ENCODE measurements at regions of chr20 and their contacts with region 1.

Region 1: GRCh38 chr20:45857114-45857881 is at the starts of genes ACOT8 and ZSWIM3:
- DNase-seq: peak; percentile 62 to 100 (median 97)
- ATAC-seq: peak; percentile 99
- H3K4me3 ChIP-seq: peak within 1 kb of the TSS; percentile 94
- H3K4me3 Mint-ChIP-seq: peak within 1 kb of the TSS; percentile 95 to 98 (median 96)
- H3K27ac ChIP-seq: peak within 1 kb of the TSS; percentile 95
- H3K27ac Mint-ChIP-seq: peak within 1 kb of the TSS; percentile 96 to 99 (median 98)
- H3K4me1 ChIP-seq: peaks cover 16 to 26% of the 10 kb centered on the region in 2 donors
- H3K4me1 Mint-ChIP-seq: peaks cover 23 to 76% (median 63%) of the 10 kb centered on the region in 7 donors
- H3K27me3 ChIP-seq: no peaks in the 10 kb centered on the region
- H3K27me3 Mint-ChIP-seq: no peaks in the 10 kb centered on the region
- total RNA-seq, gene ACOT8: 20.5 to 35.5 (median 29.2) TPM
- total RNA-seq, gene ZSWIM3: 1.3 to 6.8 (median 6.0) TPM

Region 2: DNA sequence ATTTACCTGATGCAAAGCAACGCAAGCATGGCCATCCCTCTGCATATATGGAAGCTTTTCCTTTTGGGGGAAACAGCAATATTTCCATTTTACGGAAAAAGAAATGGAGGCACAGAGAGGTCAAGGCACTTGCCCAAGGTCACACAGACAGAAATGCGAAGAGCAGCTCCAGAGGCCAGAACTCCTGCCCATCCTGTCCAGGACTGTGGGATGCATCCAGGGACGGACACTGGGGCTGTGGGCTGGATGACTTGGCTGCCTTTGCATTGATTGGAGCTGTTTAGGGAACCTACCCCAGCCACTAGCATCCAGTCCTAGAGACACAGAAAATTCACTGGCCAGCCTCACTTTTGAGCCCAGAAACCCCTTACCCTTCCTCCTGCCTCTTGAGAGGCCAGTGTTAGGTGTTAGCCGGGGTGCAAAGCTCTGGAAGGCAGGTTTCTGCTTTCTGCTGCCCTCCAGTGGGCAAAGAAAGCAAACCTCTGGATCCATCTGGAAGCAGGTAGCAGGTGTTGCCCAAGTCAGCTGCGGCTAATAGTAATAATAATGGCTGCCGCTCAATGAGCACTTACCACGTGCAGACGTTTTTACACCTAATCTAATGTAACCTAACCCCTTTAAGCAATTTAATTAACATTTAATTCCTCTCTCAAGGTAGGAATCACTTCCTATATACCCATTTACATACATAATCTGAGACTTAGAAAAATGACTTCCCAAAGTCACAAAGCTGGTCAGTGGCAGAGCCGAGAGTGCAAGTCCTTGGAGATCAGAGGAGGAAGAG is 1173.8 kb before region 1 on chr20:
- CTCF ChIA-PET with region 1: no interaction called
- POLR2A ChIA-PET with region 1: no interaction called
- intact Hi-C with region 1: no loop called
- DNase-seq: peak in 6 of 9 donors; percentile 21 to 68 (median 44)
- ATAC-seq: peak; percentile 77
- H3K4me3 ChIP-seq: no peak overlapping the region
- H3K4me3 Mint-ChIP-seq: no peak overlapping the region
- H3K27ac ChIP-seq: no peak overlapping the region
- H3K27ac Mint-ChIP-seq: peak overlapping the region in 1 of 9 donors; percentile 61
- H3K4me1 ChIP-seq: no peaks in the 10 kb centered on the region
- H3K4me1 Mint-ChIP-seq: peaks cover 5 to 15% (median 9%) of the 10 kb centered on the region in 7 donors
- H3K27me3 ChIP-seq: no peaks in the 10 kb centered on the region
- H3K27me3 Mint-ChIP-seq: peaks cover 0 to 6% (median 0%) of the 10 kb centered on the region in 5 donors

Region 3: DNA sequence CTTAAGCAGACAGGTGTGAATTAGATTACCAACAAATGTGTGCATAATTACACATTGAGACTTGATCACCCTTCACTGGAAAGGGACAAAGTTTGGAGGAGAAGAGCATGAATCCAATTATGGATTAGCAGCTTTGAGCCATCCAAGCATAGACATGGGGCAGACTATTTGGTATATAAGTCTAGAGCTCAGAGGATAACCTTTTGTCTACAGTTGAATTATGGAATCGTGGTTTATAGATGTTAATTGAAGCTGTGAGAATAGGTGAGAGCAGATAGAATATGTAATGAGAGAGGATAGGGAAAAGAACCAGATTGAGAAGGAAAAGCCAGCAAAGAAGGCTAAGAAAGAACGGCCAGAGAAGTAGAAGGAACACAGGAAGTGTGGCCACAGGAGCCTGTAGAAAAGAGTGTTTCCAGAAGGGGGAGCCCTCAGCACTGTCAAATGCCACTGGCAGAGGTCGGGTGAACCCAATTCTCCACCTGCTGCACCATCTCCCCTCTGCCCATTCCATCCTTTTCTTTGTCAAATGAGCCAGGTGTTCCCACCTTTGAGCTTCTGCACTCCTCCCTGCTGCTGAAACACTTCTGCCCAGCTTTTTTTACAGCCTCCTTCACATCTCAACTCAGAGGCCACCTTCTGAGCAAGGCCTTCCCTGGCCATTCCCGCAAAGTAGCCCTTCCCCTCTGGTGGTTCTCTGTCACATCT is 58.2 kb before region 1 on chr20:
- CTCF ChIA-PET with region 1: no interaction called
- POLR2A ChIA-PET with region 1: no interaction called
- intact Hi-C with region 1: loop called in 1 of 2 experiments (anchors 1 kb)
- DNase-seq: peak; percentile 25 to 70 (median 58)
- ATAC-seq: peak; percentile 96
- H3K4me3 ChIP-seq: no peak overlapping the region
- H3K4me3 Mint-ChIP-seq: no peak overlapping the region
- H3K27ac ChIP-seq: peak overlapping the region; percentile 24
- H3K27ac Mint-ChIP-seq: peak overlapping the region in 8 of 9 donors; percentile 1 to 92 (median 52)
- H3K4me1 ChIP-seq: peaks cover 4 to 7% of the 10 kb centered on the region in 2 donors
- H3K4me1 Mint-ChIP-seq: peaks cover 9 to 21% (median 11%) of the 10 kb centered on the region in 7 donors
- H3K27me3 ChIP-seq: no peaks in the 10 kb centered on the region
- H3K27me3 Mint-ChIP-seq: no peaks in the 10 kb centered on the region

Region 4: DNA sequence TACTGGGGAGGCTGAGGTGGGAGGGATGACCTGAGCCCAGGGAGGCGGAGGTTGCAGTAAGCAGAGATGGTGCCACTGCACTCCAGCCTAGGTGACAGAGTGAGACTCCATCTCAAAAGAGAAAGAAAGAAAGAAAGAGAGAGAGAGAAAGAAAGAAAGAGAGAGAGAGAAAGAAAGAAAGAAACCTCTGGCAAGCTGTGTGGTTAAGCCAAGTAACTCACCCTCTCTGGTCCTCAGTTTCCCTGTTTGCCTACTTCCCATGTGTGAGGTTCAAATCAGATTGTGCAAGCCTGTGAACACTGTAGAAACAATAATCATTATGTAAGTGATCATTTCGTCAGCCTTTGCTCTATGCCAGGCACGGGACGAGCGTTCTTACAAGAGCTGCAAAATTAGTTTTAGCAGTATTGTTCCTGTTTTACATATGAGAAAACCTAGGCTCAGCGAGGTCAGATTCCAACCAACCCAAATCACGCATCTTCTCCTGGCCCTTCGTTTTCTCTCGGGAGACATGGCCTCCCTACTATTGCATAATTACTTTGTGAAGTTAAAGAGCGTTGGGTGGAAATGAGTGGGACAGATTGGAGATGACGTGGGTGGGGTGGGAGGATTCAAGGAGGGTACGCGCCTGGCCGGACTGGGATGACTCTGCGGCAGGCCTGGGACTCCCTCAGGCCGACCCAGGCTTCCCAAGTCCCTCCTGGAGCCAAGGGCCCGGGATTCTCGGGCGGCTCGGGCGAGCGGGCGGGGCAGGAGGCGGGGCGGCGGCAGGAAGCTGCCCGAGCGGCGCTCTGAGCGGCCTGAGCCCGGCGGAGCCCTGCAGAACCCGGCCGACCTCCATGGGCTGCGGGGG is 24.0 kb before region 1 on chr20 and contains the start of gene SNX21:
- CTCF ChIA-PET with region 1: no interaction called
- POLR2A ChIA-PET with region 1: interaction called, 5 read pairs
- intact Hi-C with region 1: loop called (anchors 1 kb)
- DNase-seq: peak in 6 of 9 donors; percentile 20 to 44 (median 22)
- ATAC-seq: peak; percentile 68
- H3K4me3 ChIP-seq: peak within 1 kb of the TSS; percentile 61
- H3K4me3 Mint-ChIP-seq: peak within 1 kb of the TSS; percentile 81 to 95 (median 88)
- H3K27ac ChIP-seq: peak within 1 kb of the TSS; percentile 59
- H3K27ac Mint-ChIP-seq: peak within 1 kb of the TSS in 8 of 9 donors; percentile 26 to 90 (median 80)
- H3K4me1 ChIP-seq: peaks cover 4 to 5% of the 10 kb centered on the region in 2 donors
- H3K4me1 Mint-ChIP-seq: peaks cover 6 to 14% (median 9%) of the 10 kb centered on the region in 7 donors
- H3K27me3 ChIP-seq: no peaks in the 10 kb centered on the region
- H3K27me3 Mint-ChIP-seq: peaks cover 0 to 20% (median 0%) of the 10 kb centered on the region in 5 donors
- total RNA-seq, gene SNX21: 0.93 to 4.9 (median 1.5) TPM

Region 5: DNA sequence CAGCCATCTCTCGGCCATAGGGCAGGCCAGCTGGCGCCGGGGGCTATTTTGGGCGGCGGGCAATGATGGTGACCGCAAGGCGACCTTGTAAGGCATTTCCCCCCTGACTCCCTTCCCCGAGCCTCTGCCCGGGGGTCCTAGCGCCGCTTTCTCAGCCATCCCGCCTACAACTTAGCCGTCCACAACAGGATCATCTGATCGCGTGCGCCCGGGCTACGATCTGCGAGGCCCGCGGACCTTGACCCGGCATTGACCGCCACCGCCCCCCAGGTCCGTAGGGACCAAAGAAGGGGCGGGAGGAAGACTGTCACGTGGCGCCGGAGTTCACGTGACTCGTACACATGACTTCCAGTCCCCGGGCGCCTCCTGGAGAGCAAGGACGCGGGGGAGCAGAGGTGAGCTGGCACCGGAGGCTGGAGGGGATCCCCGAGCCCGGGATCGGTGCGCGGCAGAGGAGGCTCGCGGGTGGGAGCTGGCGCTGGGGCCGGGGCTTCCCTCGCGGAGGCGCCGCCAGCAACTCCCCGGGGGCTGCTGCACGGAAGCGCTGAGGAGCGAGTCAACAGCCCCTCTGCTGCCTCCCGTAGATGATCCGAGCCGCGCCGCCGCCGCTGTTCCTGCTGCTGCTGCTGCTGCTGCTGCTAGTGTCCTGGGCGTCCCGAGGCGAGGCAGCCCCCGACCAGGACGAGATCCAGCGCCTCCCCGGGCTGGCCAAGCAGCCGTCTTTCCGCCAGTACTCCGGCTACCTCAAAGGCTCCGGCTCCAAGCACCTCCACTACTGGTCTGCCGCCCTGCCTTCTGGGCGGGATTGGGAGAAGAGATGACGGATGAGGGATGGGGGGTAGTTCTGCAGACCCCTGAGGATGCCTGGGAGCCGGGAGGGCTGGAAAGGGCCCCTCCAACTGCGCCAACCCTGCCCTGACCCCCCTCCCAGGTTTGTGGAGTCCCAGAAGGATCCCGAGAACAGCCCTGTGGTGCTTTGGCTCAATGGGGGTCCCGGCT is 34.0 kb after region 1 on chr20 and contains the starts of genes CTSA and NEURL2:
- CTCF ChIA-PET with region 1: no interaction called
- POLR2A ChIA-PET with region 1: interaction called, 11 read pairs
- intact Hi-C with region 1: loop called (anchors 1 kb)
- DNase-seq: peak; percentile 62 to 90 (median 83)
- ATAC-seq: peak; percentile 87
- H3K4me3 ChIP-seq: peak within 1 kb of the TSS; percentile 96
- H3K4me3 Mint-ChIP-seq: peak within 1 kb of the TSS; percentile 88 to 95 (median 93)
- H3K27ac ChIP-seq: peak within 1 kb of the TSS; percentile 76
- H3K27ac Mint-ChIP-seq: peak within 1 kb of the TSS; percentile 85 to 97 (median 90)
- H3K4me1 ChIP-seq: peaks cover 22 to 25% of the 10 kb centered on the region in 2 donors
- H3K4me1 Mint-ChIP-seq: peaks cover 17 to 37% (median 26%) of the 10 kb centered on the region in 7 donors
- H3K27me3 ChIP-seq: no peaks in the 10 kb centered on the region
- H3K27me3 Mint-ChIP-seq: no peaks in the 10 kb centered on the region
- total RNA-seq, gene CTSA: 60.5 to 151 (median 65.1) TPM
- total RNA-seq, gene NEURL2: 1.2 to 5.3 (median 4.0) TPM

Region 6: DNA sequence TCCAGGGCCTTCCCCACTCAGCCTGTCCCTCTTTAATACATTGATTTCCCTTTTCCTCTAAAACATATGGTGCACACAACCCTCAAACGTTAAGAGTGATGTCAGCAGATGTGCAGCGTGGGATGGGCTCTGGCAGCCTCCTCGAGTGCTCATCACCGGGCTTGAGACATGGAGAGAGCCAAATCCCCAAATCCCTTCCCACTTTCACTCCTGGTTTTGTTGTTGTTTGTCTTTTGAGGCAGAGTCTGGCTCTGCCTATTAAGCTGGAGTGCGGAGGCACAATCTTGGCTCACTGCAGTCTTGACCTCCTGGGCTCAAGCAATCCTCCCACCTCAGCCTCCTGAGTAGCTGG is 60.5 kb after region 1 on chr20:
- CTCF ChIA-PET with region 1: no interaction called
- POLR2A ChIA-PET with region 1: no interaction called
- intact Hi-C with region 1: no loop called
- DNase-seq: no peak
- ATAC-seq: no peak
- H3K4me3 ChIP-seq: no peak overlapping the region
- H3K4me3 Mint-ChIP-seq: no peak overlapping the region
- H3K27ac ChIP-seq: no peak overlapping the region
- H3K27ac Mint-ChIP-seq: no peak overlapping the region
- H3K4me1 ChIP-seq: no peaks in the 10 kb centered on the region
- H3K4me1 Mint-ChIP-seq: peaks cover 0 to 6% (median 0%) of the 10 kb centered on the region in 7 donors
- H3K27me3 ChIP-seq: no peaks in the 10 kb centered on the region
- H3K27me3 Mint-ChIP-seq: peaks cover 17 to 43% (median 21%) of the 10 kb centered on the region in 5 donors

Region 7: DNA sequence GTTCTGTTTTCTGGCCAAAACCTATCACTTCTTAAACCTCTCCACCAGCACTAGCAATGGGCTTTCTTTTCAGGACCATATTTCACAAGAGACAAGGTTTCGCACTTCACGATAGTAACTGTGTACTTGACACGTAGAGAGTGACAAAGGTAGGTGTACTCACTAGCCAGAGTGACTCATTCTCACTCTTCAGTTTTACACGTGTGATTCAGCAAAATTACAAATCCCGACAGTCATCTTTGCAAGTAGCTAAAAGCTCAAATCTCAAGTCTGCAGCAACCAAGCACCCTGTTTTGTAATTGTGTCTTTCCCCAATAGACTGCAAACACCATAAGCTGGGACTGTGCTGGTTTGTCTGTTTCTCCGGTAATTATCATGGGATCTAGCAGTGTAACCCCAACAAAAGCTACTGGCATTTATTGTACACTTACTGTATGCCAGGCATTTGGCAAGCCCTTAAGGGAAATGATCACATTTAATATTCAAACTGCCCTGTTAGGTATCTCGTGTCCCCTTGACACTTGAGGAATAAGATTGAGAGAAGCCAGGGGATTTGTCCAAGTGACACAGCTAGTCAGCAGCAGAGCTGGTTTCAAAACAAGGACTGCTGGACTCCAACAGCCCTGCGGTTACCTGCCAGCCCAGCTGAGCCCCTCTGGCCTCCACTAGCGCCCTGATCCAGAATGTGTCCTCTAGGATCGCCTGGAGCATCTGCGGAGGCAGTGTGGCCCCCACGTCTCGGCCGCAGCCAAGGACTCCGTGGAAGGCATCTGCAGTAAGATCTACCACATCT is 87.1 kb after region 1 on chr20:
- CTCF ChIA-PET with region 1: no interaction called
- POLR2A ChIA-PET with region 1: no interaction called
- intact Hi-C with region 1: no loop called
- DNase-seq: no peak
- ATAC-seq: peak; percentile 41
- H3K4me3 ChIP-seq: no peak overlapping the region
- H3K4me3 Mint-ChIP-seq: no peak overlapping the region
- H3K27ac ChIP-seq: no peak overlapping the region
- H3K27ac Mint-ChIP-seq: peak overlapping the region in 4 of 9 donors; percentile 4 to 41 (median 27)
- H3K4me1 ChIP-seq: no peaks in the 10 kb centered on the region
- H3K4me1 Mint-ChIP-seq: peaks cover 0 to 18% (median 6%) of the 10 kb centered on the region in 7 donors
- H3K27me3 ChIP-seq: no peaks in the 10 kb centered on the region
- H3K27me3 Mint-ChIP-seq: no peaks in the 10 kb centered on the region